PC-9 (cell line): ENCODE measurements at regions of chr18 and their contacts with region 1.

Region 1: DNA sequence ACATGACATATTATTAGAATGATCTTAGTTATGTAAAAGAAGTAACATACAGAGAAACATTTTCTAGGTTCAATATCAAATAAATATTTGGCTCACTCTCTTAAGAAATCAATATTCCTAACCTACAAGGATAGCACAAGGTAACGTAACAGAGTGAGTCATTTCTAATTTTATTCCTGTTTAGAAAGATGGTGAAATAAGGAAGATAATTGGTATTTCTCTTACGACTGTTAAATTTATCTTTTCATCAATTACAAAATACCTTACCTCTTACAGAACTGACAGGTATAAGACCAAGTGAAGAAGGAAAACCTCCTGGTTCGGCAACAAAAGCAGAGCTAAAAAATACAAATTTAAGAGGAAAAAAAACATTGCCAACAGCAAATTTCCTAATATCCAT is 45.1 kb downstream of the PRELID3A start:
- DNase-seq: peak in 1 of 2 experiments; percentile 82
- H3K4me3 ChIP-seq: no peak overlapping the region
- H3K27ac ChIP-seq: no peak overlapping the region
- H3K4me1 ChIP-seq: peaks cover 15% of the 10 kb centered on the region
- H3K27me3 ChIP-seq: no peaks in the 10 kb centered on the region
- CTCF ChIP-seq: no peak

Region 2: GRCh38 chr18:12470382-12471075 is 17.7 kb after region 1 on chr18:
- CTCF ChIA-PET with region 1: no interaction called
- POLR2A ChIA-PET with region 1: no interaction called
- intact Hi-C with region 1: no loop called
- DNase-seq: no peak
- H3K4me3 ChIP-seq: no peak overlapping the region
- H3K27ac ChIP-seq: no peak overlapping the region
- H3K4me1 ChIP-seq: no peaks in the 10 kb centered on the region
- H3K27me3 ChIP-seq: no peaks in the 10 kb centered on the region
- CTCF ChIP-seq: no peak

Region 3: GRCh38 chr18:12516049-12516630 is 63.3 kb after region 1 on chr18:
- CTCF ChIA-PET with region 1: interaction called, 3 read pairs
- POLR2A ChIA-PET with region 1: interaction called, 14 read pairs
- intact Hi-C with region 1: no loop called
- DNase-seq: no peak
- H3K4me3 ChIP-seq: no peak overlapping the region
- H3K27ac ChIP-seq: no peak overlapping the region
- H3K4me1 ChIP-seq: no peaks in the 10 kb centered on the region
- H3K27me3 ChIP-seq: no peaks in the 10 kb centered on the region
- CTCF ChIP-seq: no peak

Region 4: DNA sequence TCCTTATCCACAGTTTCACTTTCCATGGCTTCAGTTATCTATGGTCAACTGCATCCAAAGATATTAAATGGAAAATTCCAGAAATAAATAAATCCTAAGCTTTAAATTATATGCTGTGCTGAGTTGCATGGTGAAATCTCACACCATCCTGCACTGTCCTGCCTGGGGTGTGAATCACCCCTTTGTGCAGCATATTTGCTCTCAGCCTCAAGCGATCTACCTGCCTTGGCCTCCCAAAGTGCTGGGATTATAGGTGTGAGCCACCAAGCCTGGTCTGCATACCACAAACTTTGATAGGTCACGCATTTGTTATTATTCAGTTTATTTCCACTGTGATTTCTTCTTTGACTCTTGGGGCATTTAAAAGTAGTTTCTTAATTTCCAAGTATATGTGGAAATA is 88.0 kb after region 1 on chr18:
- CTCF ChIA-PET with region 1: no interaction called
- POLR2A ChIA-PET with region 1: no interaction called
- intact Hi-C with region 1: no loop called
- DNase-seq: no peak
- H3K4me3 ChIP-seq: no peak overlapping the region
- H3K27ac ChIP-seq: no peak overlapping the region
- H3K4me1 ChIP-seq: no peaks in the 10 kb centered on the region
- H3K27me3 ChIP-seq: no peaks in the 10 kb centered on the region
- CTCF ChIP-seq: no peak

Region 5: GRCh38 chr18:12552884-12553242 is 100.1 kb after region 1 on chr18:
- CTCF ChIA-PET with region 1: no interaction called
- POLR2A ChIA-PET with region 1: no interaction called
- intact Hi-C with region 1: no loop called
- DNase-seq: no peak
- H3K4me3 ChIP-seq: no peak overlapping the region
- H3K27ac ChIP-seq: no peak overlapping the region
- H3K4me1 ChIP-seq: no peaks in the 10 kb centered on the region
- H3K27me3 ChIP-seq: no peaks in the 10 kb centered on the region
- CTCF ChIP-seq: no peak

Region 6: GRCh38 chr18:12702221-12703095 is 249.7 kb after region 1 on chr18 and contains the starts of genes CEP76 and PSMG2:
- CTCF ChIA-PET with region 1: no interaction called
- POLR2A ChIA-PET with region 1: interaction called, 10 read pairs
- intact Hi-C with region 1: no loop called
- DNase-seq: peak; percentile 61 to 90
- H3K4me3 ChIP-seq: peak within 1 kb of the TSS; percentile 81
- H3K27ac ChIP-seq: peak within 1 kb of the TSS; percentile 92
- H3K4me1 ChIP-seq: peaks cover 31% of the 10 kb centered on the region
- H3K27me3 ChIP-seq: no peaks in the 10 kb centered on the region
- CTCF ChIP-seq: no peak
- total RNA-seq, gene CEP76: 14.5 and 15.1 TPM in 2 replicates
- total RNA-seq, gene PSMG2: 107 and 123 TPM in 2 replicates